ENCODE measurements at regions of chr17 and their contacts with region 1.

Region 1: GRCh38 chr17:68398691-68399637 is 58.3 kb downstream of the WIPI1 start:
- DNase-seq: peak; percentile 86
- H3K4me3 ChIP-seq: no peak overlapping the region; a peak in 1 of 4 replicates
- H3K27ac ChIP-seq: no peak overlapping the region
- H3K4me1 ChIP-seq: peaks cover 3 to 5% of the 10 kb centered on the region in 2 experiments; a peak in 2 of 4 replicates
- H3K27me3 ChIP-seq: no peaks in the 10 kb centered on the region
- CTCF ChIP-seq: peak; percentile 87
- EP300 ChIP-seq: no peak
- RAD21 ChIP-seq: peak; percentile 79

Region 2: DNA sequence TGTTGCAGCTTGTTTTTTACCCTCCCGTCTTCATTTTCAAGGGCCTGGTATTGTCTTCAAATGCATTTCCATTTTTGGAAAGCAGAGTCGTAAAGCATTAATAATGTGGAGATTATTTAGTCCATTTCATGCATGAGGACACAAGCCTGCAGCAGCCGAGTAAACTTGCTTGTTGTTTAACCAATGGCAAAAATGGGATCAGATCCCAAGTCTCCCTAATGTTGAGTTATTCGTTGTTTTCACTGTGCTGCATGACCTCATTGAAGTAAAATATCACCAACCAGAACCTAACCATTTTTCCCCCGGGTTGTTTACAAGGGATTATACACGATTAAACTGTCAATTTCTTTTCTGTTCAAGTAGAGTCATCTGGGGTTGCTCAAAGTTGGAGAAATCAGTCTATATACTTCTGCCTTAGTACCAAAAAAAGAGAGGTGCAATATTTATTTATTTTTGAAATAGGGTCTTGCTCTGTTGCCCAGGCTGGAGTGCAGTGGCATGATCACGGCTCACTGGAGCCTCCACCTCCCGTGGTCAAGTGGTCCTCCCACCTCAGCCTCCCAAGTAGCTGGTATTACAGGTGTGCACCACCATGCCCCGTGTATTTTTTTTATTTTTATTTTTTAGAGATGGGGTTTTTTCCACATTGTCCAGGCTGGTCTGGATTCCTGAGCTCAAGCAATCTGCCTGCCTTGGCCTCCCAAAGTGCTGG is 138.8 kb before region 1 on chr17:
- CTCF ChIA-PET with region 1: interaction called, 49 read pairs
- POLR2A ChIA-PET with region 1: no interaction called
- DNase-seq: no peak
- H3K4me3 ChIP-seq: no peak overlapping the region
- H3K27ac ChIP-seq: no peak overlapping the region
- H3K4me1 ChIP-seq: no peaks in the 10 kb centered on the region
- H3K27me3 ChIP-seq: no peaks in the 10 kb centered on the region
- CTCF ChIP-seq: no peak
- EP300 ChIP-seq: no peak
- RAD21 ChIP-seq: no peak

Region 3: DNA sequence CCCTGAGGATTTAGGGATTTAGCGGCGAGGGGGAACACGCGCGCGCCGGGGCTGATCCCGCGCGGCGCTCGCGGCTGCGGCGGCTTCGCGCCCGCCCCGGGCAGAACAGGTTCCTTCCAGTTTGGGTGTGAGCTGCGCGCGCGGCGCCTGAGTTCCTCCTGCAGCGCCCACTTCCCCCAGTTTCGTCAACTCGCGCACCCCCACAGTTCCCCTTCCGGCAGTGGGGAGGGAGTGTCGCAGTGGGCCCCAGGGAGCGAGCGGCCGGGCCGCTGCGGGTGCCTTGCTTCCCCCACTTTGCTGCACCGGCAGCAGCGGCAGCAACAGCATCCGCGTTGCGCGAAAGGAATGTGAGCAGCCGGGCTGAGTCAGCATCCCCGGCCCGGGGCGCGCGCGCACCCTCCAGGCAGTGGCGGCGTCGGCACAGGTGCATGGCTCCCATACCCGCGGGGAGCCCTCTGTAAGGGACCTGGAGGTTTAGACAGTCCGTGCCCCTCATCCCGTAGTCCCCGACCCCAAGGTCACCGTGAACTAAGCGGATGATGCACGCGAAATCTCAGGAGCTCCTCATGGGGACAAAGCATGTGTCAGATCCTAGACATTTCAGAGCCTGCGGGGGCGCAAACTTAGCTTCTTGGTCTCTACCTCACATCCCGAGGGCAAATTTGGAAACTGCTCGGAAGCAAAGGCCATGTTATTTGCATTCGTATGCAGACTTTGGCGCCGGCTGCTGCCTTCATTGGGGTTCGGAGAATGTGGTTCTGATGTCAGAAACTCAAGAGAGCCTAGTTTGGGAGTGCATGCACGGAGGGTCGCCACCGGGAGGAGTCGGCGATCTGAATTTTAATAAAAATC is 106.9 kb before region 1 on chr17:
- CTCF ChIA-PET with region 1: interaction called, 12 read pairs
- POLR2A ChIA-PET with region 1: no interaction called
- DNase-seq: peak; percentile 86
- H3K4me3 ChIP-seq: peak overlapping the region; percentile 55 to 72
- H3K27ac ChIP-seq: no peak overlapping the region
- H3K4me1 ChIP-seq: peaks cover 0 to 13% of the 10 kb centered on the region in 2 experiments; a peak in 2 of 4 replicates
- H3K27me3 ChIP-seq: peaks cover 66% of the 10 kb centered on the region
- CTCF ChIP-seq: no peak
- EP300 ChIP-seq: no peak; a peak in 1 of 4 replicates
- RAD21 ChIP-seq: no peak

Region 4: GRCh38 chr17:68351395-68351794 is 47.6 kb before region 1 on chr17:
- CTCF ChIA-PET with region 1: interaction called, 25 read pairs
- POLR2A ChIA-PET with region 1: no interaction called
- DNase-seq: peak; percentile 77
- H3K4me3 ChIP-seq: no peak overlapping the region
- H3K27ac ChIP-seq: no peak overlapping the region
- H3K4me1 ChIP-seq: peaks cover 5 to 12% of the 10 kb centered on the region in 2 experiments; a peak in 3 of 4 replicates
- H3K27me3 ChIP-seq: no peaks in the 10 kb centered on the region
- CTCF ChIP-seq: peak; percentile 55
- EP300 ChIP-seq: no peak
- RAD21 ChIP-seq: peak; percentile 63

Region 5: DNA sequence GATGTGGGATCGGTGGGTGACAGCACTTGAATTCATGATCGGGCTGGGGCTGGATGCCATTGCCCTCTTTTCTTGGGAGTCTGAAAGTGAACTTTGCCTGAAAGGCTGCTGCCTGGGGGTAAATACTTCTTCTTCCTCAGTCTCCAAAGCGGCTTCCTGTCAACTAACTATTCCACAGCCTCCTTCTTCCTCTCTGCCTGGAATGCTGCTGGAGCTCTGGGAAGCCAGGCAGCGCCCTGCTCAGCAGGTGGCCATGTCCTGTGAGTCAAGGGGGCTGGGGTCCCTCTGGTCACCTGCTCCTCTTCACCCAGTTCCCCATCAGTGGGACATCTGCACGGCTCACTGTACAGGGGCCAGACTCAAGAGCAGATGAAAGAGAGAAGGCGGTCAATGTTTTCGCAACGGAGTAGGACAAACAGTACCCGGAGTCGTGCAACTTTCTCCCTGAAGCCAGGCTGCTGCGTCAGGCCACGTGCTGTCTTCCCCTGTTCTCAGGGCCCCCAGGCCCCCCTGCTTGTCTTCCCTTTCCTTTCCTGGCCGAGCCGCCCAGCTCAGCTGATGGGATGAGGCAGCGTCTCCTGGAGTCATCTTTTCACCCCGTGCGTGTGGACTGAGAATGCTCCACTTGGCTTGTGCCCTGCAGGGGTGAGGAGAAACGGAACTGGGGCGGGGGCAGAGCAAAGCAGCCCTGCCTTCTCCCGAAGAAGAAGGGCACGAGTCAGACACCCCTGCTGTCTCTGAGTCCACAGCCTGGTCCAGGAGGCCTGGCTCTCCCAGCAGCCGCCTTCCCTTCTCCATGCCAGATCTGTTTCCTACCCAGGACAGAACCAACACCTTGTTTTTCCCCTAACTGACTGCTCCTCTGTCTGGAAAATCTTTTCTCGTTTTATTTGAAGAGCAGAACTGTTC is 20.8 kb before region 1 on chr17:
- CTCF ChIA-PET with region 1: interaction called, 17 read pairs
- POLR2A ChIA-PET with region 1: no interaction called
- DNase-seq: no peak
- H3K4me3 ChIP-seq: no peak overlapping the region
- H3K27ac ChIP-seq: no peak overlapping the region
- H3K4me1 ChIP-seq: no peaks in the 10 kb centered on the region
- H3K27me3 ChIP-seq: no peaks in the 10 kb centered on the region; the same call in 1 of the 2 replicates
- CTCF ChIP-seq: no peak
- EP300 ChIP-seq: no peak
- RAD21 ChIP-seq: no peak

Region 6: DNA sequence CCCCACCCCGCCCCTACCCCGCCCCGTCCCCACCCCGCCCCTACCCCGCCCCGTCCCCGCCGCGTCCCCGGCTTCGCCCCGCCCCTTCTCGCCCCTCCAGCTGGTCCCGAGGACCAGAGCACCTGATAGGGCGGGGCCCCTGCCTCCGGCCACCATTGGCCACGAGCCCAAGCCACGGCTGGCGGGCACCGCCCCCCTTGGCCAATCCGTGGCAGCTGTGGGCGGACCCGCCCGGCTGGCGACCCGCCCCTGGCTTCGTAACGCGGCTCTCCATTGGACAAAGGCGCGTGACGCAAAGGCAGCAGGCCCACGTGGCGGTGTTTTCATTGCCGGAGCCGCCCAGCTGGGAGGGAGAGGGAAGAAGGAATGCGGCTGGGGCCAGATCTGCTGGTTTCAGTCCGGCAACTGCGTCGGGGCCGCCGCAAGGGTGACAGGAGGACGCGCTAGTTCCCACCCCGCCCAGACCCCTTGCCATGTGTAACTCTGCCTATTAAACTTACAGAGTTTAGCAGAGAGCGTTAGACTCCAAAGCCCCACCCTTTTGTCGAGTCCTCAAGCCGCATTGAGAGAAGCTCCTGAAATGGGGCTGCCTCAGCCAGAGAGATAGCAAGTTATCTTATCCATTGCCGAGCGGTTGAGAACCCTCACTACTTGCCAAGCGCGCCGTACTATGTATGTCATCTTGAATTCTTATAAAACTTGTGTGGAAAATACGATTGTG is 58.7 kb after region 1 on chr17:
- CTCF ChIA-PET with region 1: interaction called, 20 read pairs
- POLR2A ChIA-PET with region 1: no interaction called
- DNase-seq: peak; percentile 100
- H3K4me3 ChIP-seq: peak overlapping the region; percentile 77 to 93
- H3K27ac ChIP-seq: peak overlapping the region in 1 of 2 experiments; percentile 18; a peak in 1 of 4 replicates
- H3K4me1 ChIP-seq: peaks cover 8 to 23% of the 10 kb centered on the region in 2 experiments; a peak in 3 of 4 replicates
- H3K27me3 ChIP-seq: no peaks in the 10 kb centered on the region
- CTCF ChIP-seq: no peak
- EP300 ChIP-seq: no peak
- RAD21 ChIP-seq: no peak